Activated naive CD4-positive, alpha-beta T cell treated with anti-CD3 and anti-CD28 coated beads for 36 hours (primary cell): ENCODE measurements at regions of chr17 and their contacts with region 1.

Region 1: DNA sequence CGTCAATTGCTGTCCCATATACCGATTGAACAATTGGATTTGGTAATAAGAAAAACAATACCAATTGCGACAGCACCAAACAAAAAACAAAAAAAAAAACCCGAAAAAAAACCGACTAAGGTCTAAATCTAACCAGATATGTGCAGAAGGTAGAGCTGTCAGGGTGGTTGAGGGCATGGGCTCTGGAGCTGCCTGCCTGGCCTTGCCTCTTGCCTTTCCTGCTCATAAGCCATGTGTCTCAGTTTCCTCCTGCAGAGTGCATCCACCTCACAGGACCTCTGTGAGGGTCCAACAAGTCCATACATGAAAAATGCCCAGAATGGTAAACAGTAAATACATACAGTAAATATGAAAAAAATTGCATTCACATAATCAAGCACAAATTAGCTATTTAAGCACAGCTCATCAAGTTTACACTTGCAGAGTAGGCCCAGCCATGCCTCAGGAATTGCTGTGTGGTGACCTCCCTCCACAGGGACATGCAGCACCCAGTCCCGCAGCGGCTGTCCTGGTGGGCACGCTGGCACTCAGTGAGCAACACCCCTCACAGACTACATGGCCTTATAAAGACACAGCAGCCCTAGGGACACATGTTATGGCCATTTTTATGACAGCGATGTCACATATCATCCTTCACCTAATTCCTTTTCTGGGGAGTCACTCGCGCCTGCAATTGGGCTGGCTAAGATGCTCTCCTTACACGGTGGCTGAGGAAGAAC is 17.9 kb downstream of the TBC1D28 start:
- DNase-seq: no peak
- H3K4me3 Mint-ChIP-seq: no peak overlapping the region
- H3K27ac Mint-ChIP-seq: no peak overlapping the region
- H3K4me1 Mint-ChIP-seq: peaks cover 5% of the 10 kb centered on the region
- H3K27me3 Mint-ChIP-seq: no peaks in the 10 kb centered on the region

Region 2: GRCh38 chr17:18363101-18364049 is 262.9 kb before region 1 on chr17 and contains the start of gene SHMT1:
- CTCF ChIA-PET with region 1: no interaction called
- intact Hi-C with region 1: no loop called
- DNase-seq: peak; percentile 94
- H3K4me3 Mint-ChIP-seq: peak within 1 kb of the TSS; percentile 89
- H3K27ac Mint-ChIP-seq: peak within 1 kb of the TSS; percentile 83
- H3K4me1 Mint-ChIP-seq: peaks cover 15% of the 10 kb centered on the region
- H3K27me3 Mint-ChIP-seq: peaks cover 1% of the 10 kb centered on the region
- total RNA-seq, gene SHMT1: 46.7 to 51.0 TPM

Region 3: DNA sequence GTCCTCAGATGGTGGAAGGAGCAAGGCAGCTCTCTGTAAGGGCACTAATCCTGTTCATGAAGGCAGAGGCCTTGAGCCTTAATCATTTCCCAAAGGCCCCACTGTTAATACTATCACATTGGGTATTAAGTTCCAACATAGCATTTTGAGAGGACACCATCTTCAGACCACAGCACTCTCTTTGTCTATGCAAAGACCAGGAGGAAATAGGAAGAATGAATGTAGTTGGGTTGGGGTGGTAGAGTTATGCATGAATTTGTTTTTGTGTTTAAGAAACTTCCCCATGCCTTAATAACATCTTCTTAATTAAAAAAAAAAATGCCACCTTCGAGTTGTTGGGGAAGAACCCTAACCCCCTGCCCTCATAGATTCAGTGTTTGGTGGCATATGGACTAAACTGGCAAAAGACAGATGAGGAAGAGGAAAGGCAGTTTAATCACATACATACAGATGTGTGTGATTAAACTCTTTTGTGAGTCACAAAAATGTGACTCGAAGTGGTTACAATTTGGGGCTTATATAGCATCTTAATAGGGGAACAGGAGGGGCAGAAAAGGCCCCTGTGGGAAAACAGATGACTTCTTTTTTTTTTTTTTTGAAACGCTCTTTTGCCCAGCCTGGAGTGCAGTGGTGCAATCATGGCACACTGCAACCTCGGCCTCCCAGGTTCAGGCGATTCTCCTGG is 290.6 kb after region 1 on chr17:
- CTCF ChIA-PET with region 1: no interaction called
- intact Hi-C with region 1: no loop called
- DNase-seq: no peak
- H3K4me3 Mint-ChIP-seq: no peak overlapping the region
- H3K27ac Mint-ChIP-seq: no peak overlapping the region
- H3K4me1 Mint-ChIP-seq: peaks cover 44% of the 10 kb centered on the region
- H3K27me3 Mint-ChIP-seq: no peaks in the 10 kb centered on the region

Region 4: DNA sequence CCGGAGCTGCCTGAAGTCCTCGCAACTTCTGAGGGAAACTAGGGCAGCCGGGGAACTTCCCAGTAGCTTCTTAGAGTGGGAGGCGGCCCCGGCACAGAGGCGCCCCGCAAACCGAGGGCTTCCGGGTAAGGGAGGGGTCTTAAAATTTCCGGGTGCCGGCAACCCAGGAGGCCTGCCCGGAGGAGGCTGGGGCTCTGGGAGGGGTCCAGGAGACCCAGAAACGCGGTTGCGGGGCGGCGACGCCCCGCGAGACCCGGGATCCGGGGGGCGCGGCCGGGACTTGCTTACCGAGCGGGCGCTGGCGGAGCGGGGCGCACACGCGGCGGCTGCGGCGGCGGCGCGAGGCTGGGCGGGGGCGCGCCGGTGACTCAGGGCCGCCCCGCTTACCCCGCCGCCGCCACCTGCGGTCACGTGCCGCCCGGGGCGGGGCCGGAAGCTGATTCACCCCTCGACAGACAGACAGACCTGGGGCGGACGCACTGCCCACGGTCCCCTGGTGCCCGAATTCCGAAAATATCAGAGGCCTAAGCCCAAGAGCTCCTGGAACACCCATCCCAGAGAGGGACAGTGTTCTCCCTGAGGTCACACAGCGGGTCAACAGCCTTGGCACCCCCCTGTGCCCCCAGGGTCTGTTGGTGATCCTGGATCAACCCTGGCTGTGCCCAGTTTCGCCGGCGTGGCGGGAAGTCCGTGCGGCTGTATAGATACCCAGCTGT is 378.3 kb after region 1 on chr17 and contains the start of gene FAM83G:
- CTCF ChIA-PET with region 1: no interaction called
- intact Hi-C with region 1: loop called (anchors 10 kb)
- DNase-seq: peak; percentile 92
- H3K4me3 Mint-ChIP-seq: peak within 1 kb of the TSS; percentile 91
- H3K27ac Mint-ChIP-seq: peak within 1 kb of the TSS; percentile 87
- H3K4me1 Mint-ChIP-seq: peaks cover 31% of the 10 kb centered on the region
- H3K27me3 Mint-ChIP-seq: no peaks in the 10 kb centered on the region
- total RNA-seq, gene FAM83G: 10.6 TPM